ENCODE measurements at regions of chr5 and their contacts with region 1.

Region 1: DNA sequence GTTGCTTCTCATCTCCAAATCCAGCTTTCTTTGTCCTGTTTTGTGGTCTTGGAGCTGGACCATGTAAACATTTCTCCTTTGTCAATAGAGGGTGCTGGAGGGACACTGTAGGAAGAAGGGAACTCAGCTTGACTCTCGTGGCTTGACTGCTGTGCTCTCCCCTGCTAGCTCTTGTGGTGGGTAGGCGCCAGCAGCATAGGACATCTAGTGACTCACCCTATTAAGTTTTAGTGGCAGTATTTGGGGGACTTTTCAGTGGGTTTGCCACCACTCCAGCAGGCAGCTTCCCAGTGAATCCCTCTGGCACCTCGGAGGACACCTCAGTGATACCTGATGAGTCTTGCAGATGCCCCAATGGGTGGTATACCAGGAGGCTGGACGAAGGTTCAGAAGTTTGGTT is 97.8 kb downstream of the TSSK1B start:
- DNase-seq: no peak

Region 2: DNA sequence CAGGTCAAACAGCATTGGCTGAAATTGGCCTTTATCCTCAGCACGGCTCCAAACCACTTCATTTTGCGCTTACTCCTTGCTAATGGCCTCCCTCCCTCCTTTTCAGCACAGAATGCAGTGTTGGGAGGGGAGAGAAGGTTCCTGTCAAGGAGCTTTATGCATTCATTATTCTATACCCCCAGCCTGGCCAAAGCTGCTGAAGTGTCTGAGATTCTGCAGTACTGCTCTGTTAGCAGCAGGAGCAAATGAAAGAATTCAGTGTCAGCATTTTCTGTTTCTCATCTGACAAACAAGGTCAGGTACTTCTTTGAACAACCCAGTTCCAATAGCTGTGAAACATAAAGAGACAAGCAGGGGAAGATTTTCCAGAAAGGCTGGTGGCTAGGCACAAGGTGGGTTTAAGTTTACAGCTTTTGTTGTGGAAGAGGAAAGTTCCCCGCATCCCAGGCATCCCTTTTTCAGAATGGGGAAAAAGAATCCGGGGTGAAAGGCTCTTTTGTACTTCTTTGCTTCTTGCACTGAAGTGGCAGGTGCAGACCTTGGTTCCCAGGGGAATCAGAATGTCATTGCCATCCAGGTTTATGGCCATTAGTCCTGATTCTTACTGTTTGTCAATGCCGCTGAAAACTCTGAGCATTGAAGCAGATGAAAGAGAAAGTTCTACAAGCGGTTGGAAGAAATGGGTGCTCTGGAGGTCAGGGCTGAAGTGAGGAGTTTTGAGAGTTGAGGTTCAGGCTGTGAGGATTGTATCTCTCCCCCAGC is 708.6 kb before region 1 on chr5:
- intact Hi-C with region 1: no loop called
- DNase-seq: no peak

Region 3: GRCh38 chr5:113606298-113607134 is 269.5 kb after region 1 on chr5:
- intact Hi-C with region 1: loop called (anchors 2 kb)
- DNase-seq: no peak

Measured in cardiac septum (tissue), 1 donor.